OCI-LY7 (cell line): ENCODE measurements at regions of chr9 and their contacts with region 1.

Region 1: GRCh38 chr9:36102742-36103495 is 33.6 kb upstream of the GLIPR2 start:
- DNase-seq: peak; percentile 90
- H3K4me3 ChIP-seq: no peak overlapping the region
- H3K27ac ChIP-seq: no peak overlapping the region
- H3K4me1 ChIP-seq: peaks cover 4% of the 10 kb centered on the region
- CTCF ChIP-seq: peak; percentile 97

Region 2: DNA sequence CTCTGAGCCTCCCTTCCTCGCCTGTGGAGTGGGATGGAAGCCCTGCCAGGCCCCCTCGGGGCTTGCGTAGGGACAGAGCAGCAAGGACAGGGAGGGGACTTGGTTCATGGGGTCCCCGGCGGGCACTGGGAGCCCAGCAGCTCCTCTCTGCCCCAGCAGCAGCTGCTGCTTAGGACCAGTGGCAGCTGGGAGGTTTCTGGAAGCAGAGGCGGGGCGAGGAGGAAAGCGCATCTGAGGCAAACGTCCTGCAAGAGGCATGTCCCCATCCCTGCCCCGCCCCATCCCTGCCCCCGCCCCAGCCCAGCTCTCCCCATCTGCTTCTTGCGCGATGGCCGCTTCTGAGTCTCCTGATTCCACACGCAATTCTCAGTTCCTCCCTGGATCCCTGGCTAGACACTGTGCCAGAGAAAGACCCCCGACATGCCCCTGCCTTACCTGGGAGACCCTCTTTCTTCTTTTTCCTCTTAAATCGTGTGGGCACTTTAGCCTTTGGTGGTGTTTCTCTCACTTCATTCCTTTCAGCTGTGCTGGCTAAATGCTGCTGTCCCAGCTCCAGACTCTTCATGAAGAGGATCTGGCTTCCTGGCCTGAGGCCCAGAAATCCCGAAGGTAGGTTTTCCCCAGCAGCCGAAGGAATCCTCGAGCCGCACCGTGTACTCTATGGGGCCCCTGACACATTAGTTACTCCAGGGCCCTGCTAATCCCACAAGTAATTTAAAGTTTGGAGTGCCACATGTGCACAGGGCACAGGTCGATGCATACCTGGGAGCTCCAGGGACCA is 140.6 kb before region 1 on chr9:
- CTCF ChIA-PET with region 1: no interaction called
- POLR2A ChIA-PET with region 1: no interaction called
- intact Hi-C with region 1: no loop called
- DNase-seq: no peak
- H3K4me3 ChIP-seq: no peak overlapping the region
- H3K27ac ChIP-seq: no peak overlapping the region
- H3K4me1 ChIP-seq: no peaks in the 10 kb centered on the region
- CTCF ChIP-seq: no peak

Region 3: DNA sequence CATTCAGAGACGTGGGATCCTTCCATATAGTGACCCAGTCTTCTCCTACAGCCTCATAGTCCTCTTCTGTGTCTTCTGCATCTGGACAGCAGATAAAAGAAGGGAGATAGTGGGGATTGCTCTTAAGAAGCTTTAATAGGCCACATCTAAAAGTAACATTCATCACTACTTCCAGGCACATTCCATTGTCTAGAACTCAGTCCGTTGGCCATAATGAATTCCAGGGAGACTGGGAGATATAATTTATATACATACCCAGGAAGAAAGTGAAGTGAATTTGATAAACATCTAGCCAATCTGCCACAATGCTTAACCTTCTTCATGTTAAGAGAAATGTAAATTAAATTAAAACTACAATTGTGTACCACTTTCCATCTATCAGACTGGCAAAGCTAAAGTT is 11.1 kb after region 1 on chr9:
- CTCF ChIA-PET with region 1: interaction called, 3 read pairs
- POLR2A ChIA-PET with region 1: interaction called, 12 read pairs
- intact Hi-C with region 1: no loop called
- DNase-seq: no peak
- H3K4me3 ChIP-seq: no peak overlapping the region
- H3K27ac ChIP-seq: no peak overlapping the region
- H3K4me1 ChIP-seq: no peaks in the 10 kb centered on the region
- CTCF ChIP-seq: no peak

Region 4: DNA sequence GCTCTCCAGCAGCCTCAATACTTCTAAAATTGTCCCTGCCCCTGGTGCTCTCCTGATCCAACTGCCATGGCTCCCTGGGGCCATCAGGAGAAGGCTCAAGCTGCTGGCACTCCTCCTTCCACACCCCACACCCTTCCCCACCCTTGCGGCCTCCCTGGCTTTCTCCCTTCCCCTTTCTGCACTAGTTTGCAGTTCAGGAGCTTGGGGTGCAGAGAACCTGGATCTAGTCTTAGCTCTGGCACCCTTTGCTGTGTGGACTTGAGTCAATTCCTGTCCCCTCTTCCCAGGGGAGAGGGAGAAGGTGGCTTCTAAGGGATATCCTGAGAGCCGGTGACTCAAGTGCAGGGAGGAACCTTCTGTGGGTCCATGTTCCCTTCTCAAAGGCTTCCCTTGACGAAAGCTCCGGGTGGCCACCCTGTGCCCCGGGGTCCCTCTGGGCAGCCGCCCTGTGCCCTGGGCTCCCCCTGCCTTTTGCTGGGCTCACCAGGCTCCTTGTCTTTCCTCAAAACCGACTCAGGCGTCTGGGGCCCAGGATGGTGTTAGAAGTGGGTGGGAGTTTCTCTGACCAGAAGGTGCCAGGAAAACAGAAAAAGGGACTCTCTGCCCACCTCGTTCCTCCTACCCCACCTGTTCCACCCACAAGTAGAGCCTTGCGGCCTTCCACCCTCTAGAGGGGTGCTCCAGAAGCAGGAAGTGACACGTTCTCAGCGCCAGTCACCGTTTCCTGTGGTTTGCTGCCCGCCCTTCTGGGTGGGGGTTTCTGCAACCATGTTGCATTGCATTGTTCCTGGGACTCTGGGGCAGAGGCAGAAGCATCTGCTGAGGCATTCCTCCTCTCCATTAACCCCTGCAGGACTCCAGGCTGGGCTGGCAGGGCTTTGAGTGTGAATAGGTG is 48.6 kb after region 1 on chr9:
- CTCF ChIA-PET with region 1: interaction called, 7 read pairs
- POLR2A ChIA-PET with region 1: interaction called, 9 read pairs
- intact Hi-C with region 1: loop called (anchors 5 kb)
- DNase-seq: peak; percentile 92
- H3K4me3 ChIP-seq: peak overlapping the region; percentile 64
- H3K27ac ChIP-seq: peak overlapping the region; percentile 74
- H3K4me1 ChIP-seq: peaks cover 46% of the 10 kb centered on the region
- CTCF ChIP-seq: no peak

Region 5: DNA sequence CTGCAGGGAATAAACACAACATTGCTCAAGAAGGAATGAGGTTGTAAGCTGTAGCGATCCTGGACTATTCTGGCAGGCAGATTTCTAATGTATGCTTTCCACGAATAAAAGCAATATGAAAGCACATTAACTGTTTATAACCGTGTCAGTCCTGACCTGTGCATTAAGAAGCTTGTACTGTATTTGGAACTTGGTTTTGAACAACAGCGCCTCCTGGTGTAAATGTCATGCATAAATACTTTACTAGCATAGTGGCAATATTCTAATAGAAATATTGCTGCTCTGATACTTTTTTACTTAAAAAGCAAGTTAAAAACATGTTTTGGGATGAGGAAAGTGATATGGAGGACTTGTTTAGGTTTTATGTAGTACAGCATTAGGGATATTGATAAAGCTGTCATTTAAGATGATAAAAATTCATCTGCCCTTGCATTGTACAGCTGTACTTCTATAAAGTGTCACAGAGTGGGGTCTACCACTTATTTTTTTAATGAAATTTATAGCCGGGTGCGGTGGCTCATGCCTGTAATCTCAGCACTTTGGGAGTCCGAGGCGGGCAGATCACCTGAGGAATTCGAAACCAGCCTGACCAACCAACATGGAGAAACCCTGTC is 226.0 kb after region 1 on chr9:
- CTCF ChIA-PET with region 1: no interaction called
- POLR2A ChIA-PET with region 1: no interaction called
- intact Hi-C with region 1: loop called (anchors 10 kb)
- DNase-seq: peak; percentile 78
- H3K4me3 ChIP-seq: no peak overlapping the region
- H3K27ac ChIP-seq: no peak overlapping the region
- H3K4me1 ChIP-seq: no peaks in the 10 kb centered on the region
- CTCF ChIP-seq: peak; percentile 96